ENCODE measurements at regions of chr12 and their contacts with region 1.

Region 1: GRCh38 chr12:45660330-45660729 is 69.2 kb upstream of the ARID2 start:
- DNase-seq: no peak
- H3K4me3 ChIP-seq: no peak overlapping the region
- H3K27ac ChIP-seq: no peak overlapping the region
- H3K4me1 ChIP-seq: no peaks in the 10 kb centered on the region
- H3K27me3 ChIP-seq: no peaks in the 10 kb centered on the region
- CTCF ChIP-seq: no peak
- POLR2A ChIP-seq: no peak

Region 2: DNA sequence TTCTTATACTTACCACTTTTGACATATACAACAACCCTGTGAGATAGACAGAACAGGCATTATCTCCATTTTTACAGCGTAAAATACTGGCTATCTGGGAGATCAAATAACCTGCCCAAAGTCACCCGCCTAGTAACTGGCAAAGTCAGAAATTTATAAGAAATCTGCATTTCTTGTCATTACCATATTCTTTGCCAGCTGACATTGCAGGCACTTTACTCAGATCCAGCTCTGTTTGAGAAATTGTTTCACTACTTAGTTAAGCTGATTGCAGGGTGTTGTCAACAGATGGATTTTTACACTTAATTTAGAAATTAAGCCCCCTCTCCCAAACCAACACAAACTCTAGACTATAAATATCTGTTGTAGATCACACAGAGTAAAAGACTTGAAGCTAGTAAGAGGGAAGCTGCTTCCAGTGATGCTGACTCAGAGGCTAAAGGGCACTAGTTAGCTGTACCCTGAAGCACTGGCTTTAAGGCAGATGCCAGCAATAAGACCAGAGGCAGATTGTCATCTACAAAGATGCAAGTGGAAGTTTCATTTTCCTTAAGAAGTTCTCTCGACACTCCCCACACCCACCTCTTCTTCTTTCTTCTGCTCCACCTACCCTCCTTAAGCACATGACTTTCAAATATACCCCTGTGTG is 291.4 kb before region 1 on chr12:
- intact Hi-C with region 1: no loop called
- DNase-seq: no peak
- H3K4me3 ChIP-seq: no peak overlapping the region
- H3K27ac ChIP-seq: no peak overlapping the region
- H3K4me1 ChIP-seq: no peaks in the 10 kb centered on the region
- H3K27me3 ChIP-seq: no peaks in the 10 kb centered on the region
- CTCF ChIP-seq: no peak
- POLR2A ChIP-seq: no peak

Region 3: DNA sequence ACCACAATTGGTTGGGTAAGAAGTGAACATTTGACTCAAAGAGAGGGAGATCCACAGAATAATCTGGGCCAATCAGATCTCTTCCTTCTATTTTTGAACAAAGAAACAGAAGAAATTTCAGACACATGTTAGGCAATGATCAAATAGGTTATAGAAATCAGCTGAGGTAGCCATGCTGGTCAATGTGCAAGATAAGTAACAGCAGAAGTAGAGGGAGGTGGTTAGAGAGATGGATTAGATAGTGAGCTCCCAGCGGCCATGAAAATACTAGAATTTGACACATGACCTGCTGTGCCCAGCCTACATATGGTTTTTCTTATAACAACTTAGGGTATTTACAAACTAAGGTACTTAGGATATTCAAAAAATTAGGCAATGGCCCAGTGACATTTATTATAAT is 161.7 kb before region 1 on chr12:
- intact Hi-C with region 1: loop called (anchors 5 kb)
- DNase-seq: no peak
- H3K4me3 ChIP-seq: no peak overlapping the region
- H3K27ac ChIP-seq: no peak overlapping the region
- H3K4me1 ChIP-seq: no peaks in the 10 kb centered on the region
- H3K27me3 ChIP-seq: no peaks in the 10 kb centered on the region
- CTCF ChIP-seq: no peak
- POLR2A ChIP-seq: no peak

Region 4: DNA sequence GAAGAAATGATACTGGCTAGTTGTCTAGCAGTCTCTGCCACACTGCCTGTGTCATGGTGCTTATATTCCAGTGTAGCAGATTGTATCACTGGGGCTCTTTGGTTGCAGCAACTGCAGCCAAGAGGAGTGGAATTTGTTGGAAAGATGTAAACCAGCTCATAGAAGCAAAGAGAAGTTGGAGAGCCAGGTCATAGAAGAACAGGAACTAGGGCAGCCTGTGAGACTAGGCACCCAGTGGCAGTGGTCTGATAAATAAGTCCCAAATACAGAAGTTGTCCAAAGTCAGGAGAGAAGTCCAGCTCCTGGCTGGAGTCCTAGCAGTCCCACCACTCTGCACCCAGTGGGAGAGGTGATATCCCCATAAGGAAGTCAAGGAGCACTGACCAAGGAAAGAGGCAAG is 103.3 kb before region 1 on chr12:
- intact Hi-C with region 1: no loop called
- DNase-seq: no peak
- H3K4me3 ChIP-seq: no peak overlapping the region
- H3K27ac ChIP-seq: no peak overlapping the region
- H3K4me1 ChIP-seq: no peaks in the 10 kb centered on the region
- H3K27me3 ChIP-seq: no peaks in the 10 kb centered on the region
- CTCF ChIP-seq: no peak
- POLR2A ChIP-seq: no peak